ENCODE measurements at regions of chr17 and their contacts with region 1.

Region 1: DNA sequence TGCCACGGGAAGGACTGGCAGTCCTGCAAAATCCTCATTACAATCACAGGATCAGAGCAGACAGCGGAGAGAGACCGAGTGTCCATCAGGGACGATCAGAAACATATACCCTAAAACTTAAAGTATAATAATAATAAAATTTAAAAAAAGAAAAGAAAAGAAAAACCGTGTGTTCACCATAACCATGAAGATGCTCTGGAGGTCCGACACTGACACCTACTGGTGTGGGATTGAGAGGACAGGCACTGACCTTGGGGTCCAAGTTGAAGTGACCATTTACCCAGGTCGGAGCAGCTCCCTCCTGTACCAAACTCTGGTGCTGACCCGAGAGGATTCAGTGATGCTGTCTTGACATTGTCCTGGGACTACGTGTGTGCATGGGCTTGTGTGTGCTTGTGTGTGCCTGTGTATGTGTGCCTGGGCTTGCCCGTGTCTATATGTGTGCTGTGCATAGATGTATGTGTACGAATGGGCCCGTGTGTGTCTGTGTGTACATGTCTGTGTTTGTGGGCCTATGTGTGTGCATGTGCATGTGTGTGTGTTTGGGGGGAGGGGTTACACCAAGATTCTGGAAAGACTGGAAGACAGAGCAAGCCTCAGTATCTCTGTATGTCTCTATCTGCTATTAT is 10.0 kb upstream of the CD300LD start:
- DNase-seq: peak in 1 of 2 donors; percentile 61
- ATAC-seq: peak; percentile 55 to 70 (median 69)
- H3K4me3 ChIP-seq: no peak overlapping the region
- H3K4me3 Mint-ChIP-seq: no peak overlapping the region
- H3K27ac ChIP-seq: no peak overlapping the region
- H3K27ac Mint-ChIP-seq: no peak overlapping the region
- H3K4me1 ChIP-seq: peaks cover 49% of the 10 kb centered on the region
- H3K4me1 Mint-ChIP-seq: no peaks in the 10 kb centered on the region
- H3K27me3 ChIP-seq: no peaks in the 10 kb centered on the region
- H3K27me3 Mint-ChIP-seq: peaks cover 9 to 32% of the 10 kb centered on the region in 2 donors
- CTCF ChIP-seq: peak; percentile 67

Region 2: DNA sequence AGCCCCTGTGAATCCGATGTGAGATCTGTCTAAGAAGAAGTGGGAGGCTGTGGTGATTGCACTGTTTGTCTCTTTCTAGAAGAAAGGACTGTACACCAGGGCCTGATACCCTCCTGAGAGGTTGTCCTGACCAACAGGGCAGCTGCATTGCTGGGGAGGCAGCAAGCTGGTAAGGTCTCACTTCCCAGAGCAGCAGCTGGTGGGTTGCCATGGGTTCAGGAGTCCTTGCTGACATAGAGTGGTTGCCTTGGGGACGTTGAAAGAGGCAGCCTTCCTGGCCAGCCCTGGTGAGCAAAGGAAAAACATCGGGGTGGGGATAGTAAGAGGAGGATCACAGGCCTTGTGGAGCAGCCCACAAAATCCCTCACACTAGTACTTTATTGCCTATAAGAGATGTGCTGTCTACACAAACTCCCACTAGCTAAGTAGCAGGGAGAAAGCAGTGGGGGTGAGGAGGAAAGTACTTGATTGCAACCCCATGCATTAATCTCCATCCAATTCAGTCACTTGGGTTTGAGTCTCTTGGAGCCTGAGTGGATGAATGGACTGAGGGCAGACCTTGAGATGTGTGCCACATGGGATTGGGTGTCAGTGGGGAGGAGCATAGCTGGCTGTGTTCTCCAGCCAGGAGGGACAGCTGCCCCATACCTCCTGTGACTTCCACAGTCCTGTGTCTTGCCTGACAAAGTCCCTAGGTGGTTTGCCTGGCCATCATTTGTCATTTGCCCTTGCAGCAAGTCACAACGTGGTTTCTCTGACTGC is 542.4 kb before region 1 on chr17:
- intact Hi-C with region 1: no loop called
- DNase-seq: no peak
- ATAC-seq: no peak
- H3K4me3 ChIP-seq: no peak overlapping the region
- H3K4me3 Mint-ChIP-seq: no peak overlapping the region
- H3K27ac ChIP-seq: no peak overlapping the region
- H3K27ac Mint-ChIP-seq: no peak overlapping the region
- H3K4me1 ChIP-seq: no peaks in the 10 kb centered on the region
- H3K4me1 Mint-ChIP-seq: no peaks in the 10 kb centered on the region
- H3K27me3 ChIP-seq: no peaks in the 10 kb centered on the region
- H3K27me3 Mint-ChIP-seq: peaks cover 20 to 34% of the 10 kb centered on the region in 2 donors
- CTCF ChIP-seq: no peak

Region 3: GRCh38 chr17:74305865-74306654 is 296.0 kb before region 1 on chr17:
- intact Hi-C with region 1: loop called (anchors 5 kb)
- DNase-seq: no peak
- ATAC-seq: no peak
- H3K4me3 ChIP-seq: no peak overlapping the region
- H3K4me3 Mint-ChIP-seq: no peak overlapping the region
- H3K27ac ChIP-seq: no peak overlapping the region
- H3K27ac Mint-ChIP-seq: no peak overlapping the region
- H3K4me1 ChIP-seq: peaks cover 8% of the 10 kb centered on the region
- H3K4me1 Mint-ChIP-seq: peaks cover 6 to 11% of the 10 kb centered on the region in 2 donors
- H3K27me3 ChIP-seq: no peaks in the 10 kb centered on the region
- H3K27me3 Mint-ChIP-seq: no peaks in the 10 kb centered on the region
- CTCF ChIP-seq: no peak

Region 4: DNA sequence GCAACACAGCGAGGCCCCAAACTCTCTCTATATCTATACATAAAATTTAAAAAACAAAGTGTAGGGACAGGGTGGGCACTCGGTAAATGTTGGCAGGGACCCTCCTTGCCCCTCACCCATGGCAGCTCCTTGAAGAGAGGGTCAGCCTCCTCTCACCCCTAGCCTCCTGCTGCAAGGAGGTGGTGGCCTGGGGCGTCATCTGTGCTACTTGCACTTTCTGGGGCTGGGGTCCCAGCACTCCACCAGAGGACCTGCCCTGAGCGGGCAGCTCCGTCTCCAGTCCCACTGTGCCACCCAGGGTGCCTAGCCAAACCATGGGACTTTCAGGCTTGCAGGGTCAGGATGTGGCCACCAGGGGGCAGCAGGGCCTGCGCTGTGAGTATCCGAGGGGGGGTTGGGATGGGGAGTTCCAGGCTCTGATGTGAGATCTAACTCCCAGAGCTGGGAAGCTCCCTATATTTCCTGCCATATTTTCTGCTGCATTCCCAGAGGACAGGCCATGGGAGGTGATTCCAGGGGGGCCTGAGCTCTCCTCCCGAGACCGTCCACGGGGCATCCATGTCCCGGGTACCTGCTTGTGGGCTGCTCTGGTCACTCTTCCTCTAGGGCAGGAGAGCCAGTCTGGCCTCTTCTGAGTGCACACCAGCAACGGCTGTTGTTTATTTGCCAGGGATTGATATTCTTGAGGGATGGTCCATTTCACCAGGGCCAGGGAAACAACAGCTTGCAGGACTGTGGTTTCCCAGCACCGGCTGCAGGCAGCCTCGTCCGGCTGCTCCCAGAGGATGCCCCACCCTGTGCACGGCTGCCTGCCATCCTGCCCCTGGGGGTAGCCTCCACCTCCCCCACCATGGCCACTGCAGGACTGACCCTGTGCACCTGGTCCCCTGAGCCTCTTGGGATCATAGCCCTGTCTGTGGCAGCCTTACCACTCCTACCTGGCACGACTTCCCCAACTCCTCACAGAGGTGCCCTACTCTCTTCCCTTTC is 233.7 kb before region 1 on chr17:
- intact Hi-C with region 1: loop called (anchors 5 kb)
- DNase-seq: peak; percentile 78 to 87
- ATAC-seq: peak; percentile 76 to 90 (median 90)
- H3K4me3 ChIP-seq: no peak overlapping the region
- H3K4me3 Mint-ChIP-seq: peak overlapping the region; percentile 71
- H3K27ac ChIP-seq: no peak overlapping the region
- H3K27ac Mint-ChIP-seq: peak overlapping the region in 1 of 2 donors; percentile 75
- H3K4me1 ChIP-seq: peaks cover 20% of the 10 kb centered on the region
- H3K4me1 Mint-ChIP-seq: peaks cover 17 to 18% of the 10 kb centered on the region in 2 donors
- H3K27me3 ChIP-seq: peaks cover 2% of the 10 kb centered on the region
- H3K27me3 Mint-ChIP-seq: peaks cover 0 to 6% of the 10 kb centered on the region in 2 donors
- CTCF ChIP-seq: peak; percentile 93

Region 5: DNA sequence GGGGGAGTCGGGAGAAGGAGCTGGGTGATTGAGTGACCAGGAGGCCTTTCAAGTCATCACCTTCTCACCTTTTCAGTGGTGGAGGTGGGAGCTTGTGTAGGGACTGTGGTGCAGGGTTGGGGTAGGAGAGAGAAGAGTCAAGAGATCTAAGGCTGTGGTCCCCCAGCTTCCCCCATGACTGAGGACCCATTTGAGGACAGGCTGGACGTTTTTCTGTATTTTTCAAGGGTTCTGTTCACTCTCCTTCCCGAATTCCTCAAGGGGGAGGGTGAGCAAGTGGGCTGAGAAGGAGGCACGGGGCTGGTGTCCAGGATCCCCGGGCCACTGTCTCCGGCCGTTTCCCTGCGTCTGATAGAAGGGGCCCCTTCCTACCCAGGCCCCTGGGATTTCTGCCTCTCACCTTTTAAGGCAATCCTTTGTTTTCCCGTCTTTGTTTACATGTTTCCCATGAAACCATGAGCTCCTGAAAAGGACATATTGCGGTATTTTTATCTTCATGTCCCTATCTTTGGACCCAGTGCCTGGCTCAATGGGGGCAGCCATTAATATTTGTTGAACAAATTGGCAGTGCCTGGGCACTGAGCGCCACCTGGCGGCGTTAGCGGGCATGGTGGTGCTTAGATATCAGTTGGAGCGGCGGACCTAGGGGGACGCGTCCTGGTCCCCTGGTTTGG is 144.8 kb before region 1 on chr17:
- intact Hi-C with region 1: no loop called
- DNase-seq: peak; percentile 79 to 87
- ATAC-seq: peak; percentile 68 to 75 (median 68)
- H3K4me3 ChIP-seq: no peak overlapping the region
- H3K4me3 Mint-ChIP-seq: peak overlapping the region; percentile 53
- H3K27ac ChIP-seq: no peak overlapping the region
- H3K27ac Mint-ChIP-seq: peak overlapping the region in 1 of 2 donors; percentile 21
- H3K4me1 ChIP-seq: peaks cover 74% of the 10 kb centered on the region
- H3K4me1 Mint-ChIP-seq: peaks cover 32 to 56% of the 10 kb centered on the region in 2 donors
- H3K27me3 ChIP-seq: peaks cover 2% of the 10 kb centered on the region
- H3K27me3 Mint-ChIP-seq: no peaks in the 10 kb centered on the region
- CTCF ChIP-seq: peak; percentile 91

Measured in natural killer cell (primary cell).